ENCODE measurements at regions of chr14 and their contacts with region 1.

Region 1: DNA sequence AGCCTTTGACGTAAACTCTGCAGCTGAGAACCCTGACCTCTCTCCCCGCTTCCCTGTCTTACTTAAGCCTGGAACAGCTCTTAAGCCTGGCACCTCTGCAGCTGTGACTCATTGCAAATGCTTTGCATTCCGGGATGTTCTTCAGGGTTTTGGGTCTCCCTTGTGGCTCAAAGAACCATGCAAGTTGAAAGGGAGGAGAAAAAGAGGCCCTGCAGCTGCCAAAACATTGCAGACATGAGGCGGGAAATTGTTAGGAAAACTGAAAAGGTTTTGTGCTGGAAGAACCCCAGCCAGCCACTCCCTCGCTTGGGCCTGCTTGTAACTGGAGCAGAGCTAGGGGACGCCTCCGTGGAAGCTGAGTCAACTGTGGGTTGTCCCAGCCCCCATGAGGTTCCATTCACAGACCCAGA is 60.2 kb upstream of the FERMT2 start:
- DNase-seq: peak; percentile 99
- ATAC-seq: peak; percentile 93
- H3K4me3 ChIP-seq: no peak overlapping the region
- H3K27ac ChIP-seq: peak overlapping the region; percentile 73
- H3K4me1 ChIP-seq: peaks cover 7% of the 10 kb centered on the region
- H3K27me3 ChIP-seq: no peaks in the 10 kb centered on the region
- CTCF ChIP-seq: no peak
- POLR2A ChIP-seq: no peak
- RAD21 ChIP-seq: no peak

Region 2: GRCh38 chr14:52776816-52777215 is 234.2 kb before region 1 on chr14:
- CTCF ChIA-PET with region 1: no interaction called
- POLR2A ChIA-PET with region 1: interaction called, 11 read pairs
- dilution Hi-C with region 1: no loop called
- in situ Hi-C with region 1: no loop called
- intact Hi-C with region 1: no loop called
- DNase-seq: no peak
- ATAC-seq: no peak
- H3K4me3 ChIP-seq: no peak overlapping the region
- H3K27ac ChIP-seq: no peak overlapping the region
- H3K4me1 ChIP-seq: no peaks in the 10 kb centered on the region
- H3K27me3 ChIP-seq: no peaks in the 10 kb centered on the region
- CTCF ChIP-seq: no peak
- POLR2A ChIP-seq: no peak
- RAD21 ChIP-seq: no peak

Region 3: GRCh38 chr14:53044486-53044885 is 33.4 kb after region 1 on chr14:
- CTCF ChIA-PET with region 1: no interaction called
- POLR2A ChIA-PET with region 1: no interaction called
- dilution Hi-C with region 1: no loop called
- in situ Hi-C with region 1: no loop called
- intact Hi-C with region 1: loop called (anchors 2 kb)
- DNase-seq: peak; percentile 91
- ATAC-seq: peak; percentile 70
- H3K4me3 ChIP-seq: no peak overlapping the region
- H3K27ac ChIP-seq: peak overlapping the region; percentile 82
- H3K4me1 ChIP-seq: peaks cover 19% of the 10 kb centered on the region
- H3K27me3 ChIP-seq: no peaks in the 10 kb centered on the region
- CTCF ChIP-seq: no peak
- POLR2A ChIP-seq: no peak
- RAD21 ChIP-seq: no peak

Measured in IMR-90 (cell line).